HEK293 (cell line): ENCODE measurements at regions of chr12 and their contacts with region 1.

Region 1: GRCh38 chr12:69254046-69254445 is 14.7 kb downstream of the CPSF6 start:
- H3K4me3 ChIP-seq: no peak overlapping the region
- H3K27ac ChIP-seq: no peak overlapping the region
- H3K4me1 ChIP-seq: peaks cover 11% of the 10 kb centered on the region
- CTCF ChIP-seq: 0 out of 2 replicates have a peak, but pooled peaks have one; percentile 16

Region 2: DNA sequence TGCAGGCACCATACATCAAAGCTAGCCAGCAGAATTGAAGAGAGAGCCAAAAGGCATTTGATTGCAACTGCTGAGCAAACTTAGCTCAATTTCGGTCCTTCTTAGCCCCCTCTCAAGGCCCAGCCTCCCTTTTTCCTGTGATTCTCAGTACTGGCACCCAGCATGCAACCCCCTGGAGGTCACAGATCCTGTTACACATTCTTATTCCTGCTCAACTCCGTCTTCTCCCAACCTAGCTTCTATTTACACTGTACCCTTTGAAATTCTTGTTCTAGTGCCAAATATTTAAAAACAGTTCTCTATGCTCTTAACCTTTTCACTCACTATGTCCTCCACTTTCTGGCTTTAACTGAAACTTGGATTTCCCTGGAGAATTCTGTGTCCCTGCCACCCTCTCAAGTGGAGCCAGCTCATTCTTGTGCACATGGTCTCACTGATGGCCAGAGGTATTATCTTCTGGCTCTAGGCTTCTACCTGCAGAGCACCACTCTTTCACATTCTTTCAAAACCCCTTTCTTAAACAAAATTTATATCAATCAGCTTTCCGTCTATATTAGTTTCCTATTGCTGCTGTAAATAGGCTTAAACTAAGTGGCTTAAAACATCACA is 145.9 kb before region 1 on chr12:
- CTCF ChIA-PET with region 1: no interaction called
- POLR2A ChIA-PET with region 1: no interaction called
- H3K4me3 ChIP-seq: no peak overlapping the region
- H3K27ac ChIP-seq: no peak overlapping the region
- H3K4me1 ChIP-seq: peaks cover 12% of the 10 kb centered on the region
- CTCF ChIP-seq: no peak

Region 3: GRCh38 chr12:69243099-69244084 is 10.7 kb before region 1 on chr12:
- CTCF ChIA-PET with region 1: interaction called, 12 read pairs
- POLR2A ChIA-PET with region 1: interaction called, 3 read pairs
- H3K4me3 ChIP-seq: no peak overlapping the region
- H3K27ac ChIP-seq: no peak overlapping the region
- H3K4me1 ChIP-seq: peaks cover 24% of the 10 kb centered on the region
- CTCF ChIP-seq: no peak

Region 4: DNA sequence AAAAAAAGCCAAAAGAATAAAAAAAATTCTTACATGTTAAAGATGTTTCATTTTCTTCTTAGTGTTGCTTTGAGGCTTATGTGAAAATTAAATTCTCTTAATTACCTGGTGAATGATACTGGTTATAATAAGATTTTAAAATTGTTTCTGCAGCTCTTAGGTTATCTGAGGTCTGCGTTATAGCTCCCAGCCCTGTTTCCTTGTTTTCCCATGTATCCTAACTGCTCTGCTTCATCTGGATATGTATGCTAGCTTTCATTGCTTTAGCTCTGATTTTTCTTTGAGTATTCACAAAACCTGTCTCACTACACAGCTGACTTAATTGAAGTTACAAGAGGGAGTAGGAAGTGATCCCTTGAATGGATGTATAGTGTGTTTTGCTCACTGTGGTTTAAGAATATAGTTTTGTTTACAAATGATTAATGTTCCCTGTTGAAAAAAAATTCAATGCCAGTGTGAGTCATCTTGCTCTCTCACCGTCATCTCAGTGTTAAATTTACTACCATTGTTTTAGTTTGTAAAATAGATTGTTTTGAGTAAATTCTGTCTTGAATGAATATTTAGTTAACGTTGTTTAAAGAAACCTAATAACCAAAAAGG is 12.1 kb after region 1 on chr12:
- CTCF ChIA-PET with region 1: interaction called, 23 read pairs
- POLR2A ChIA-PET with region 1: no interaction called
- H3K4me3 ChIP-seq: no peak overlapping the region
- H3K27ac ChIP-seq: no peak overlapping the region
- H3K4me1 ChIP-seq: peaks cover 4% of the 10 kb centered on the region; the same call in 1 of the 2 replicates
- CTCF ChIP-seq: no peak

Region 5: DNA sequence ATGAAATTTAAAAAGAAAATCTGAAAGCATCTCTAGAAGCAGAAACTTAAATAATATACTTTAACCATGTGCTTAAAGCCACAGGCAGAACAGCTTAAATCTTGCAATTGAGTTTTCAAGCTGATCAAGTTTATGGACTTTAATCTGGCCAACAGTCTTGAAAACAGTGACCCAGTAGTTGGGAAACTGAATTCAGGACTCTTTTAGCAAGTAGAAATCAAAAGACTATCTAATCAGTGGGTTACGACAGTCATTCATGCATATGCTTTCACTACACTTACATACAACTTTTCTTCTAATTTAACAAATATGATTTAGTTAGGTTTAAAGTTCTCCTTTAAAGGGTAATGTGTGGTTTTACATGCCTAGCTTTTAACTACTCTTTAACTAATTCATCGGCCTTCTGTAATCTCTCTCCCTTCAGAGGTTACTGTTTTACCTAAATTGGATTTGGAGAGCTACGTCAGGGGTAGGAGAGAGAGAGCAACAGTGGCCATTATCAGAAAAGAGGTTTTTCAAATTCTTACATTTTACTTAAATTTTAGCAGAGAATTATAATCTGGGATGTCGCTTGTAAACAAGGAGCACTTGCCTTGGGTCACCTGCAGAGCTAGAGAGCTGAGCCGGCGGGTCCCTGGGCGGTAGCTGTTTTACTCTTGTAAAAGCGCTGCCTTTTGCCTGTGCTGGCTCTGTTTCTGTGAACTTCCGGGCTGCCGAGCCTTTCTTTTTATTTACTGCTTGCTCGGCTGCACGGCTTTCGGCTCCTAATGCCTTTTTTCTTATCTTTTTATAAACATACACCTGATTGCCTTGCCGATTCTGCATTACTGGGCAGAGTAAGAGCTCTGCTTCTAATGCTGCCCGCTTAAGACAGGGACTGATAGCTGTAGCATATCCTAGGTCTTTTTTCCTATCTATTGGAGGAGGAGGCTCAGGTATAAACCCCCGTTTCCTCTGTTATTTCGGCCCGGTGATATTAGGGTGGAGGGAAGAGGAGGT is 76.7 kb after region 1 on chr12:
- CTCF ChIA-PET with region 1: no interaction called
- POLR2A ChIA-PET with region 1: no interaction called
- H3K4me3 ChIP-seq: peak overlapping the region; percentile 22
- H3K27ac ChIP-seq: no peak overlapping the region
- H3K4me1 ChIP-seq: no peaks in the 10 kb centered on the region; the same call in 1 of the 2 replicates
- CTCF ChIP-seq: no peak